Caco-2 (cell line): ENCODE measurements at regions of chr6 and their contacts with region 1.

Region 1: DNA sequence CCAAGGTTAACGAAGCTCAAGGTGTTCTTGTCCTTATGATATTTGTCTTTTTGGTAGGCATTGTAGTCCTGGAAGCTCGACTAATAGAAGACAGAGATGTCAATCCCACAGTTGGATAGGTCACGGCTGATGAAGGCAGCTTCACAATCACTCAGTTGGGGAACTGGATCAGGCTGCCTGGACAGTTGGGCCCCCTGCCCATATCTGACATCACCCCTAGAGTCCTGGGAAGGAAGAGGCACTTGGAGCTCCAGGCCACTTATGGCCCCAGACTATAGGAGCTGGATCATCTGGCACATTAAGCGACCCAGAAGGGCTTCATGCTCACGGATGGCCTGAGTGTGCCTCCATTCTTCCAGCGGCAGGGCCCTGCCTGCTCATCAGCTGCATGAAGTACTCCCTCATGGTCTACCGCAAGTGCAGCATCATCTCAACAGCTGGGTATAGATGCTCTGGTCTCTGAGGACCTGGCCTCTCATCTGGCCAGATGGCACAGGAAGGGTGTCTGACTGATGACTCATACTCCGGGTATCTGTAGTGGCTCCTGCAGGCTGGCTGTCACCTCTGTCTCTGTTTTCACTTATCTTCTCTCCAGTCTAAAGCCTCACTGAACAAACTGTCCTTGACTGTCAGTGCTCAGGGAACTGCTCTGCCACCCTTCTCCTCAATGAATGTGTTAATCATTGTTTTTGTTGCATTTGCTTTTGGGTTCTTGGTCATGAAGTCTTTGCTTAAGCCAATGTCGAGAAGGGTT is 29.2 kb upstream of the SSR1 start:
- DNase-seq: no peak
- H3K4me3 ChIP-seq: no peak overlapping the region
- H3K4me3 Mint-ChIP-seq: no peak overlapping the region
- H3K27ac Mint-ChIP-seq: no peak overlapping the region
- H3K4me1 ChIP-seq: peaks cover 4% of the 10 kb centered on the region
- H3K4me1 Mint-ChIP-seq: no peaks in the 10 kb centered on the region
- H3K27me3 ChIP-seq: no peaks in the 10 kb centered on the region
- H3K27me3 Mint-ChIP-seq: no peaks in the 10 kb centered on the region
- CTCF ChIP-seq: no peak

Region 2: DNA sequence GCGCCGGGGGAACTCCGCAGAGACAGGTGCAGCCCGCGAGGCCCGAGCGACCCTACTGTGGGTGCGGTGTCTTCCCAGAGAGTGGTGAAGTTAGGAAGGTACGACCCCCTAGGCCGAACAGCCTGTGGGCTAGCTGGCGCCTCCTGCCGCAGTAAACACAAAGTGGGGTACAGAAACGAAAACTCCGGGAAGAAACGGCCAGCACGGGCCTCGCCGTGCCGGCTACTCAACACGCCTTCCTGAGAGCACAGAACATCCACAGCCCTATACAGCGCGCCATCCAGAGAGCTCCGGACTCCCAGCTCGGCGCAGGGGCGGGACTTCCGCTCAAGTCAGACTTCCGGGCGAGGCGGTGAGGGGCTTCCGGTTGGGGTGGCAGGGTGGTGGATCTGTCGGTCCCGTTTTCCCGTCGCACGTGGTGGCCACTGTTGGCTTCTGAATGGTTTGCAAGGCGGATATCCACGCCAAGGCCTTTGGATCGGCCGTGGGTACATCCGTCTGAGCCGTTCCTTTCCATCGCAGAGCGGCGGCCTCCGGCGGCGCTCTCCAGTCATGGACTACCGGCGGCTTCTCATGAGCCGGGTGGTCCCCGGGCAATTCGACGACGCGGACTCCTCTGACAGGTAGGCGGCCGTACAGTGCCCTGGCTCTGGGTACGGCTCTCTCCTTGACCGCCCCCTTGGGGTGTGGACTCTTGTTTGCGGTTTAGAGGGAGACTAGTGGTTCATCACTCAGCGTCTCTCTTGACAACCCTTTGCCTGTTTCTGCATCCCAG is 47.5 kb after region 1 on chr6 and contains the starts of genes CAGE1 and RIOK1:
- CTCF ChIA-PET with region 1: interaction called, 4 read pairs
- POLR2A ChIA-PET with region 1: interaction called, 8 read pairs
- intact Hi-C with region 1: loop called (anchors 2 kb)
- DNase-seq: peak; percentile 95
- H3K4me3 ChIP-seq: peak within 1 kb of the TSS; percentile 59
- H3K4me3 Mint-ChIP-seq: peak within 1 kb of the TSS; percentile 77
- H3K27ac Mint-ChIP-seq: peak within 1 kb of the TSS; percentile 99
- H3K4me1 ChIP-seq: peaks cover 17% of the 10 kb centered on the region
- H3K4me1 Mint-ChIP-seq: peaks cover 34% of the 10 kb centered on the region
- H3K27me3 ChIP-seq: no peaks in the 10 kb centered on the region
- H3K27me3 Mint-ChIP-seq: no peaks in the 10 kb centered on the region
- CTCF ChIP-seq: peak in 1 of 2 experiments; percentile 27
- total RNA-seq, gene CAGE1: 0.26 and 0.59 TPM in 2 replicates
- total RNA-seq, gene RIOK1: 34.2 and 36.1 TPM in 2 replicates